Naive thymus-derived CD4-positive, alpha-beta T cell (primary cell): ENCODE measurements at regions of chr11 and their contacts with region 1.

Region 1: DNA sequence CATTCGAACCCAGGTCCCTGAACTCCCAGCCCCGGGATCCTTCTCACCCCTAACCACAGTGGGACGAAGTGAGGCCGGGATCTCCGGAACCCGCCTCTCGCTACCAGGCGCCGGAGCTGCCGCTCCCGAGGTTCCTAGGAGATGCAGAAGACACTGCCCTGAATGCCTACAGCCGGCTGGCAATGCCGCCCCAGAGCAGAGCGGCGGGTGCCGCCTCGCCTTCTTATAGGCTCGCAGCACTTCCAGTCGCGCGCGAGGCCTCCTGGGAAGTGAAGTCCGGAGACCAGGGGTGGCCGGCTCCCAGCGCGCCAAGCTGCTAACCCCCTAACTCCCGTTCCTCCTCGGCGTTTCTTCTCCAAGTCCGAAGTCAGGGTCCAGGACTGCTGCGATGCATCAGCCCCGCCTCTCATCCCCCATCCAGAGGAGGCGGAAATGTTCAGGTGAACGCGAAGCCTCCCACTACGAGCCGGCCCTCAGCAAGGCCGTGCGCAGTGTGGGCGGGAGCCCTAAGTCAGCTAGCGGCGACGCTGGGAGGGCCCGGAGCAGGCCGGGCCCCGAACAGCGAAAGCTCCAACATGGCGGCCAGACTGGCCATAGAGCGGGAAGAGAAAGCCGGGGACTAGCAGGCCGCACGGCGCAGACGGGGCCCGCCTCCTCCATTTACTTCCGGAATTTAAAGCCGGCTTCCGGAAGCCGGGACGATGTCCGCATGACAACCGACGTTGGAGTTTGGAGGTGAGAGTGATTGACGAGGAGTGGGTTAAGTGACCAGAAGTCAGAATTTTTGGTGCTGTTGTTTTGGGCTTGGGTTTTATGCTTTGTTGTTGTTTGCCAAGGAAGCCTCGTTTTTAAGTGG is at the starts of genes CYB561A3 and TMEM138:
- DNase-seq: peak; percentile 69 to 90 (median 81)
- ATAC-seq: peak; percentile 93
- H3K4me3 ChIP-seq: peak within 1 kb of the TSS; percentile 97
- H3K4me3 Mint-ChIP-seq: peak within 1 kb of the TSS; percentile 94 to 99 (median 98)
- H3K27ac ChIP-seq: peak within 1 kb of the TSS; percentile 95
- H3K27ac Mint-ChIP-seq: peak within 1 kb of the TSS; percentile 97 to 100 (median 99)
- H3K4me1 ChIP-seq: peaks cover 14 to 19% of the 10 kb centered on the region in 2 donors
- H3K4me1 Mint-ChIP-seq: peaks cover 30 to 55% (median 40%) of the 10 kb centered on the region in 7 donors
- H3K27me3 ChIP-seq: no peaks in the 10 kb centered on the region
- H3K27me3 Mint-ChIP-seq: no peaks in the 10 kb centered on the region
- total RNA-seq, gene CYB561A3: 37.9 to 47.6 (median 44.2) TPM
- total RNA-seq, gene TMEM138: 54.6 to 65.1 (median 59.9) TPM

Region 2: GRCh38 chr11:59615637-59616395 is 1746.1 kb before region 1 on chr11 and contains the start of gene OSBP:
- CTCF ChIA-PET with region 1: no interaction called
- POLR2A ChIA-PET with region 1: no interaction called
- intact Hi-C with region 1: loop called in 1 of 2 experiments (anchors 5 kb)
- DNase-seq: peak; percentile 86 to 100 (median 99)
- ATAC-seq: peak; percentile 84
- H3K4me3 ChIP-seq: peak within 1 kb of the TSS; percentile 72
- H3K4me3 Mint-ChIP-seq: peak within 1 kb of the TSS; percentile 82 to 99 (median 94)
- H3K27ac ChIP-seq: peak within 1 kb of the TSS; percentile 93
- H3K27ac Mint-ChIP-seq: peak within 1 kb of the TSS; percentile 84 to 98 (median 94)
- H3K4me1 ChIP-seq: peaks cover 26 to 29% of the 10 kb centered on the region in 2 donors
- H3K4me1 Mint-ChIP-seq: peaks cover 35 to 54% (median 41%) of the 10 kb centered on the region in 7 donors
- H3K27me3 ChIP-seq: no peaks in the 10 kb centered on the region
- H3K27me3 Mint-ChIP-seq: no peaks in the 10 kb centered on the region
- total RNA-seq, gene OSBP: 39.8 to 57.6 (median 52.4) TPM

Region 3: DNA sequence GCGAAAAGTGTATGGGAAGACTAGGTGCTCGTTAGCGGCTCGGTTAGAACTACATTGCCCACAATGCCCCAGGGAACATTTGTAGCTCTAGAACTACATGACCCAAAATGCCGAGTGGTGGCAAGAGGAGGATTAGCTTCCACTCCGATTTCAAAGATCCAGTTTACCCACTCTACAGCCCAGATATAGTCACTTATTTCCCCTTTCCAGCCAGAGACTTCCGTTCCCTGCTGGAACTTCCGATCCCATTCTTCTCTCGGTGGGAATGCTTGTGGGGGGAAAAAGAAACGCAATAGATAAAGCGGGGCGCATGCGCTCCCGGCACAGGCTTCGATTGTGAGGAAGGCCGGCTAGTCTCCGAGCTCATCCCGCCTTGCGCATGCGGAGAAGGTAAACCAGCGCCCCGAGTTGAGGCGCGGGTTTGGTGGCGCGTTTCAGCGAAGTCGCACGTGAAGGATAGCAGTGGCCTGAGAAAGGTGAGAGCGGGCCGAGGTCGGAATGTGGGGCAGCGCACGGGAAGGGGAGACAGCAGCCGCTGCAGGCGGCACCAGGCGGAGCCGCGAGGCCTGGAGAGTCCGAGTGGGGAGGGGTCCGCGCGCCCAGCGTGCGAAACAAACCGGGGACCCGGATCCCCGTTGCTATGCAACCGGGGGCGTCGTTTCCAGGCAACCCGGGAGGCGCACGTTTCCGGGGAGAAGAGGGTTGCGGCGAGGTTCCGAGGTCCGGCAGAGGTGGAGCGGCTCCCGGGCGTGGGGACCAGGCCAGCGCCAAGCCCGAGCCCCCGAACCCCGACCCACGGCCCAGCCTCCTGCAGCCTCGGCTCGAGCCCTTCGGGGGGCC is 447.9 kb before region 1 on chr11 and contains the start of gene TMEM109:
- CTCF ChIA-PET with region 1: no interaction called
- POLR2A ChIA-PET with region 1: no interaction called
- intact Hi-C with region 1: loop called in 1 of 2 experiments (anchors 10 kb)
- DNase-seq: peak; percentile 77 to 93 (median 91)
- ATAC-seq: peak; percentile 76
- H3K4me3 ChIP-seq: peak within 1 kb of the TSS; percentile 94
- H3K4me3 Mint-ChIP-seq: peak within 1 kb of the TSS; percentile 91 to 99 (median 98)
- H3K27ac ChIP-seq: peak within 1 kb of the TSS; percentile 94
- H3K27ac Mint-ChIP-seq: peak within 1 kb of the TSS; percentile 91 to 99 (median 97)
- H3K4me1 ChIP-seq: peaks cover 43 to 45% of the 10 kb centered on the region in 2 donors
- H3K4me1 Mint-ChIP-seq: peaks cover 39 to 77% (median 60%) of the 10 kb centered on the region in 7 donors
- H3K27me3 ChIP-seq: no peaks in the 10 kb centered on the region
- H3K27me3 Mint-ChIP-seq: peaks cover 0 to 11% (median 0%) of the 10 kb centered on the region in 5 donors
- total RNA-seq, gene TMEM109: 49.8 to 99.8 (median 56.9) TPM

Region 4: GRCh38 chr11:61332797-61333549 is 28.9 kb before region 1 on chr11 and contains the starts of genes DDB1 and TKFC:
- CTCF ChIA-PET with region 1: interaction called, 44 read pairs
- POLR2A ChIA-PET with region 1: interaction called, 82 read pairs
- intact Hi-C with region 1: loop called (anchors 1 kb)
- DNase-seq: peak; percentile 91 to 99 (median 97)
- ATAC-seq: peak; percentile 96
- H3K4me3 ChIP-seq: peak within 1 kb of the TSS; percentile 84
- H3K4me3 Mint-ChIP-seq: peak within 1 kb of the TSS; percentile 83 to 100 (median 95)
- H3K27ac ChIP-seq: peak within 1 kb of the TSS; percentile 99
- H3K27ac Mint-ChIP-seq: peak within 1 kb of the TSS; percentile 91 to 100 (median 98)
- H3K4me1 ChIP-seq: peaks cover 27 to 30% of the 10 kb centered on the region in 2 donors
- H3K4me1 Mint-ChIP-seq: peaks cover 33 to 67% (median 64%) of the 10 kb centered on the region in 7 donors
- H3K27me3 ChIP-seq: no peaks in the 10 kb centered on the region
- H3K27me3 Mint-ChIP-seq: no peaks in the 10 kb centered on the region
- total RNA-seq, gene DDB1: 153 to 213 (median 160) TPM
- total RNA-seq, gene TKFC: 36.9 to 59.9 (median 43.3) TPM

Region 5: GRCh38 chr11:61392981-61393595 is 31.2 kb after region 1 on chr11:
- CTCF ChIA-PET with region 1: interaction called, 8 read pairs
- POLR2A ChIA-PET with region 1: interaction called, 39 read pairs
- intact Hi-C with region 1: loop called (anchors 1 kb)
- DNase-seq: peak in 7 of 9 donors; percentile 23 to 45 (median 37)
- ATAC-seq: peak; percentile 59
- H3K4me3 ChIP-seq: peak overlapping the region; percentile 84
- H3K4me3 Mint-ChIP-seq: peak overlapping the region; percentile 90 to 99 (median 94)
- H3K27ac ChIP-seq: peak overlapping the region; percentile 87
- H3K27ac Mint-ChIP-seq: peak overlapping the region; percentile 93 to 98 (median 97)
- H3K4me1 ChIP-seq: peaks cover 9 to 10% of the 10 kb centered on the region in 2 donors
- H3K4me1 Mint-ChIP-seq: peaks cover 9 to 25% (median 21%) of the 10 kb centered on the region in 7 donors
- H3K27me3 ChIP-seq: no peaks in the 10 kb centered on the region
- H3K27me3 Mint-ChIP-seq: no peaks in the 10 kb centered on the region

Region 6: GRCh38 chr11:61657566-61657965 is 295.7 kb after region 1 on chr11:
- CTCF ChIA-PET with region 1: no interaction called
- POLR2A ChIA-PET with region 1: no interaction called
- intact Hi-C with region 1: no loop called
- DNase-seq: no peak
- ATAC-seq: no peak
- H3K4me3 ChIP-seq: no peak overlapping the region
- H3K4me3 Mint-ChIP-seq: no peak overlapping the region
- H3K27ac ChIP-seq: no peak overlapping the region
- H3K27ac Mint-ChIP-seq: no peak overlapping the region
- H3K4me1 ChIP-seq: no peaks in the 10 kb centered on the region
- H3K4me1 Mint-ChIP-seq: peaks cover 0 to 4% (median 0%) of the 10 kb centered on the region in 7 donors
- H3K27me3 ChIP-seq: no peaks in the 10 kb centered on the region
- H3K27me3 Mint-ChIP-seq: peaks cover 12 to 17% (median 14%) of the 10 kb centered on the region in 5 donors